Heart left ventricle (tissue), 16 donors: ENCODE measurements at regions of chr13 and their contacts with region 1.

Region 1: GRCh38 chr13:52450012-52450792 is at the start of gene VPS36:
- DNase-seq: peak; percentile 95 to 98 (median 96)
- ATAC-seq: peak; percentile 72 to 94 (median 88)
- H3K4me3 ChIP-seq: peak within 1 kb of the TSS; percentile 69 to 92 (median 82)
- H3K27ac ChIP-seq: peak within 1 kb of the TSS; percentile 94 to 100 (median 98)
- H3K4me1 ChIP-seq: peaks cover 0 to 41% (median 22%) of the 10 kb centered on the region in 12 donors
- H3K27me3 ChIP-seq: no peaks in the 10 kb centered on the region
- CTCF ChIP-seq: peak; percentile 99 to 100 (median 100)
- POLR2A ChIP-seq: peak in 1 of 2 donors; percentile 71
- total RNA-seq, gene VPS36: 27.8 to 38.5 (median 32.8) TPM

Region 2: DNA sequence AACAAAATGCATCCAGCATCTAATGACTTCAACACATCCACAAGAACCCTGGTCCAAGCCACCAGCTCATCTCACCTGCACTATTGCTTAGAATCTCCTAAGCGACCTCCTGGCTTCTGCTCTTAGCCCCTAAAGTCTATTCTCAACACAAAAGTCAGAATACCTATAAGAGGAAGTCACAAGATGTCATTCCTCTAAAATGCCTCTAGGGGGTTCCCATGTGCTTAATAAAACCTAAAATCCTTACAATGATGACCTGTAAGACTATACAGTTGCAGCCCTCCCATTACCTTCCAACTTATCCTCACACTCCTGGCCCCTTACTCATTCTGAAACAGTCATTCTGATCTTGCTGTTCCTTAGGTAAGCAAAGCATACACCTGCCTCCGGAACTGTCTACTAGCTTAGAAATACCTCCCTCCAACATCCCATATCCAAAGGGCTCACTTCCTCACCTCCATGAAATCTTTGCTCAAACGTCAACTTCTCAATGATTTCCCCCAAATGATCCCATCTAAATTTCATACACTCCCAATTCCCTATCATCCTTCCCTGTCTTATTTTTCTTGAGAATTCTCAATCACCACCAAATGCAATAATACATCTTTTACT is 449.0 kb before region 1 on chr13:
- intact Hi-C with region 1: loop called in 1 of 10 experiments (anchors 5 kb)
- DNase-seq: no peak
- ATAC-seq: peak in 3 of 4 donors; percentile 36 to 48 (median 40)
- H3K4me3 ChIP-seq: no peak overlapping the region
- H3K27ac ChIP-seq: no peak overlapping the region
- H3K4me1 ChIP-seq: peaks cover 0 to 25% (median 5%) of the 10 kb centered on the region in 12 donors
- H3K27me3 ChIP-seq: no peaks in the 10 kb centered on the region
- CTCF ChIP-seq: peak; percentile 52 to 83 (median 69)
- POLR2A ChIP-seq: no peak

Region 3: DNA sequence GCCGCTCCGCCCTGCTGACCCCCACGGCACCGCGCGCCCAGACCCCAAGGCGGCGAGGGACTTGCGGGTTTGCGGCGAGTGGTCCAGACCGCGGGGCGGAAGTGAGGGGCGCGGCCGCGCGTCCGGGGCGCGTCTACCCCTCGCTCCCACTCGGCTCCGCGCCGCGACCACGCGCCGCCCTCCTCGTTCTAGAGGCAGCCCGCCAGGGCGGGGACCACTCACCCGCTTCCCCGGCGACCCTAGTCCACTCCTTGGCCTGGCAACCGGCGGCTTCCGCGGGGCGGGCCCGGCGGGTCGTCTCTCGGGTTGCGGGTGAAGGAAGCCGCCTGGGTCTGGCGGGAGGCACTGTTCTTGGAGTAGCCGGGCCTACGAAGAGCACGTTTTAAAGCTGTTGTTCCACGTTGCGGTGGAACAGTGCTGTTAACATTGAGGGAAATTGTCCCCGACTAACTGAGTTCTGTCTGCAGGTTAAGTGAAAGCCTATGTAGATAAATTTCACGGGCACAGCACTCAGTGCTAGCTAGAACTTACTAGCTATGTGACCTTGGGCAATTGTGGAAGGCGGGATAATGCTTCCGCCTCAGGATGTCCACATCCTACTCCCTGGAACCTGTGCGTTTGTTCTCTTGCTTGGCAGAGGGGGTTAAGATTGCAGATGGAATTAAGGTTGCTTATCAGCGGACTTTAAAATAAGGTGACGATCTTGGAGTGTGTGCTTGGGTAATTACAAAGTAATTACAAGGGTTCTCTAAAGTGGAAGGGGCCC is 290.7 kb before region 1 on chr13 and contains the start of gene NEK3:
- intact Hi-C with region 1: loop called in 2 of 10 experiments (anchors 5 to 10 kb)
- DNase-seq: peak; percentile 77 to 87 (median 84)
- ATAC-seq: peak; percentile 80 to 96 (median 93)
- H3K4me3 ChIP-seq: peak within 1 kb of the TSS; percentile 73 to 99 (median 88)
- H3K27ac ChIP-seq: peak within 1 kb of the TSS; percentile 81 to 98 (median 90)
- H3K4me1 ChIP-seq: peaks cover 0 to 46% (median 23%) of the 10 kb centered on the region in 12 donors
- H3K27me3 ChIP-seq: no peaks in the 10 kb centered on the region
- CTCF ChIP-seq: no peak
- POLR2A ChIP-seq: peak in 1 of 2 donors; percentile 30
- total RNA-seq, gene NEK3: 2.3 to 10.7 (median 5.2) TPM

Region 4: GRCh38 chr13:52344108-52344507 is 106.1 kb before region 1 on chr13:
- intact Hi-C with region 1: loop called (anchors 1 to 10 kb)
- DNase-seq: no peak
- ATAC-seq: peak; percentile 34 to 90 (median 66)
- H3K4me3 ChIP-seq: peak overlapping the region in 5 of 12 donors; percentile 6 to 44 (median 23)
- H3K27ac ChIP-seq: peak overlapping the region in 11 of 12 donors; percentile 24 to 62 (median 37)
- H3K4me1 ChIP-seq: peaks cover 0 to 4% (median 0%) of the 10 kb centered on the region in 12 donors
- H3K27me3 ChIP-seq: no peaks in the 10 kb centered on the region
- CTCF ChIP-seq: no peak
- POLR2A ChIP-seq: no peak

Region 5: DNA sequence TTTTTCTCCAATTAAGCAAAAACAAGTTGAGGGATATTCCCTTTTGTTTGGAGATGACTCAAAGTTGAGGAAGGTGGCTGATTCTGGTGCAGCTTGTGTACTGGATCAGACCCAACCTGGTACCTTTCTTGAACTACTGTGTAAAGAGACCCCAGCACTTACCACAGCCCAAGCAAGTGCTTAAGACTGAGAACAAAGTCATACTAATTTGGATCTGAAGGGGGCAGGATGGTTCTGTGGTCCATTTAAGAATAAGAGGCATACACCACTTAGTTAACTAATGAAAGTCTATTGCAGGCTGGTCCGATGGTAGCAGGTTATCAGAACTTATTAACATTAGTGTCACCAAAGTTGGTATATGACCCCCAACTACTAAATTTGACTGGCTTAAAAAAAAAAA is 50.5 kb before region 1 on chr13:
- intact Hi-C with region 1: loop called in 4 of 10 experiments (anchors 2 to 10 kb)
- DNase-seq: no peak
- ATAC-seq: peak in 2 of 4 donors; percentile 36 to 61
- H3K4me3 ChIP-seq: no peak overlapping the region
- H3K27ac ChIP-seq: no peak overlapping the region
- H3K4me1 ChIP-seq: peaks cover 0 to 45% (median 14%) of the 10 kb centered on the region in 12 donors
- H3K27me3 ChIP-seq: no peaks in the 10 kb centered on the region
- CTCF ChIP-seq: peak in 7 of 12 donors; percentile 18 to 33 (median 23)
- POLR2A ChIP-seq: no peak

Region 6: GRCh38 chr13:52428295-52428694 is 21.9 kb before region 1 on chr13:
- intact Hi-C with region 1: loop called in 1 of 10 experiments (anchors 2 kb)
- DNase-seq: peak in 1 of 5 donors; percentile 36
- ATAC-seq: peak in 3 of 4 donors; percentile 57 to 92 (median 66)
- H3K4me3 ChIP-seq: no peak overlapping the region
- H3K27ac ChIP-seq: peak overlapping the region in 9 of 12 donors; percentile 25 to 70 (median 38)
- H3K4me1 ChIP-seq: peaks cover 0 to 21% (median 14%) of the 10 kb centered on the region in 12 donors
- H3K27me3 ChIP-seq: no peaks in the 10 kb centered on the region
- CTCF ChIP-seq: no peak
- POLR2A ChIP-seq: no peak

Region 7: GRCh38 chr13:52786747-52787146 is 336.5 kb after region 1 on chr13:
- intact Hi-C with region 1: no loop called
- DNase-seq: no peak
- ATAC-seq: no peak
- H3K4me3 ChIP-seq: no peak overlapping the region
- H3K27ac ChIP-seq: no peak overlapping the region
- H3K4me1 ChIP-seq: no peaks in the 10 kb centered on the region
- H3K27me3 ChIP-seq: peaks cover 0 to 6% (median 0%) of the 10 kb centered on the region in 9 donors
- CTCF ChIP-seq: no peak
- POLR2A ChIP-seq: no peak

Region 8: GRCh38 chr13:53075356-53076041 is 625.3 kb after region 1 on chr13:
- intact Hi-C with region 1: no loop called
- DNase-seq: no peak
- ATAC-seq: no peak
- H3K4me3 ChIP-seq: no peak overlapping the region
- H3K27ac ChIP-seq: no peak overlapping the region
- H3K4me1 ChIP-seq: no peaks in the 10 kb centered on the region
- H3K27me3 ChIP-seq: peaks cover 0 to 5% (median 0%) of the 10 kb centered on the region in 9 donors
- CTCF ChIP-seq: no peak
- POLR2A ChIP-seq: no peak